Calu3 (cell line): ENCODE measurements at regions of chrX and their contacts with region 1.

Region 1: GRCh38 chrX:124378643-124379042 is 32.3 kb downstream of the SH2D1A start:
- DNase-seq: no peak
- H3K4me3 Mint-ChIP-seq: no peak overlapping the region
- H3K27ac Mint-ChIP-seq: no peak overlapping the region
- H3K4me1 Mint-ChIP-seq: no peaks in the 10 kb centered on the region
- H3K27me3 Mint-ChIP-seq: no peaks in the 10 kb centered on the region
- CTCF ChIP-seq: no peak

Region 2: GRCh38 chrX:124211312-124211942 is 167.2 kb before region 1 on chrX:
- CTCF ChIA-PET with region 1: no interaction called
- intact Hi-C with region 1: loop called (anchors 10 kb)
- DNase-seq: peak; percentile 15
- H3K4me3 Mint-ChIP-seq: no peak overlapping the region
- H3K27ac Mint-ChIP-seq: no peak overlapping the region
- H3K4me1 Mint-ChIP-seq: no peaks in the 10 kb centered on the region
- H3K27me3 Mint-ChIP-seq: peaks cover 18% of the 10 kb centered on the region
- CTCF ChIP-seq: peak; percentile 29